Sciatic nerve (tissue), 2 donors: ENCODE measurements at regions of chr12 and their contacts with region 1.

Region 1: GRCh38 chr12:98821866-98822265 is 176.8 kb downstream of the APAF1 start:
- DNase-seq: no peak
- ATAC-seq: peak; percentile 67

Region 2: DNA sequence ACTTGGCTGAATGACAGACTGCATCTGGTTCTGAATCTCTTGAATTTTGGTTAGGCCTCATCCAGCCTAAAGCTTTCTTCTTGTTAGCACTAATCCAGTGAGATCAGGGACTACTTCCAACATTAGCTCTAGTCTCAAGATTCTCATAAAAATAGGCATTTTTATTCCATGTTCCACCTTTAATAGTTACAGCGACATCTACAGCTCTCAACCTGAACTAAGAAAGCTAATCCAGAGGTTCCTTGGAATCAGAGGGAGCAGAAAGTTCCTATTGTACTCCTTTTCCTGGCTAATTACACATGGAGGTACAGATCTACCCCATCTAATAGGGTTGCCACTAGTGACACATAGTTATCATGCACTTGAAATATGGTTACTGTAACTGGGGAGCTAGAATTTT is 967.4 kb before region 1 on chr12:
- intact Hi-C with region 1: no loop called
- DNase-seq: no peak
- ATAC-seq: no peak

Region 3: DNA sequence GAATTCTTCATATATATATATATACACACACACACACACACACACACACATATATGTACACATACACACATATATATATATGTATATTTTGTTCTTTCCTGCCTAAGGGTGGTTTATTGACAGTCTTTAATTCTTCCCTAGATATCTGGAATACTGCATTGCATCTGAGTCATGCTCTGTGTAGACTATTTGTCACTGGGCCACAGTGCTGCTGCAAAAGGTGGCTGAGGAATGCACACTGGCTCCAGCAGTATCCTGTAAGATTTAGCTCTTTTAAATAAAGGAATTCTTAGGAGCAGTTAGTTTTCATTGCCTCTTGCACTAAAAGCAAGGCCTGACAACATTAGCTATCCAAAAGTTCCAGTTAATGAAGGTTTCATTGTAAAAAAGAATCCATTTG is 24.1 kb after region 1 on chr12:
- intact Hi-C with region 1: loop called (anchors 1 kb)
- DNase-seq: no peak
- ATAC-seq: no peak

Region 4: DNA sequence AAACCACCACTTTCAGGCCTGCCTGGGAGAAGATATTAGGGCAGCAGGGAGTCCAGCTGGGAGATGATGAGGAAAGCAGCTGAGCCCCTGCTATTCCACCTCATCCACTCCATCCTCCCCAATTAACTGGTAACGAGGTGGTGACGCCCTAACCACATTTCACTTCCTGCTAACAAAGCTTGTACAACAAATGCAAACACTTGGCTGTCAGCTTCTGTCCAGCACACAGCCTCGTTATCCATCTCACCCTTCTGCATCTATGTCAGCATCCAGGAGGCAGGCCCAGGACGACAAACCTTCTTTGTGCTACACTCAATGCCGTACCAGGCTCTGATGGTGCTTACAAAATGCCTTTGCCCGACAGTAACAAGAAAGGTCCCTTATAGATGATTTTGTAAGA is 48.6 kb after region 1 on chr12:
- intact Hi-C with region 1: no loop called
- DNase-seq: no peak
- ATAC-seq: no peak